Esophagus muscularis mucosa (tissue), 4 donors: ENCODE measurements at regions of chr10 and their contacts with region 1.

Region 1: DNA sequence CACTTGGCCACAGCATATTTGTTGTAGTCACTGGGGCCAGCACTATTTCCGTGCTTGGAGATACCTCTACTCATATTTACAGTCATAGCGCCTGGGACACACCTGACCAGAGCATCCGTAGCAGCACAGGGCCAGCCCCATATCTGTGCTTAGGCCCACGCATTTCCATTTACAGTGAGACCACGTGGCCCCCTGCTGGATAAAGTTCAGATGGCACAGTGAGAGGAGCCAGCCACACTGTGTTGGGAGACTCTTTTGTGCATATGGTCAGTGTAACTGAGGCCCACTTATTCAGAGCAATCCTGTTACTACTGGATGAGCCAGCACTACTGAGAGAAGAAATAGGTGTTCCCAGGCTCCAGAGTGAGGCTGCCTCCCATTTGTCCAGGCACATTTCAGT is 455.3 kb downstream of the REEP3 start:
- DNase-seq: peak; percentile 82
- H3K4me3 ChIP-seq: no peak overlapping the region
- H3K27ac ChIP-seq: no peak overlapping the region
- H3K4me1 ChIP-seq: no peaks in the 10 kb centered on the region
- H3K27me3 ChIP-seq: no peaks in the 10 kb centered on the region
- CTCF ChIP-seq: peak in 2 of 3 experiments; percentile 15 to 40
- EP300 ChIP-seq: no peak
- POLR2A ChIP-seq: no peak

Region 2: DNA sequence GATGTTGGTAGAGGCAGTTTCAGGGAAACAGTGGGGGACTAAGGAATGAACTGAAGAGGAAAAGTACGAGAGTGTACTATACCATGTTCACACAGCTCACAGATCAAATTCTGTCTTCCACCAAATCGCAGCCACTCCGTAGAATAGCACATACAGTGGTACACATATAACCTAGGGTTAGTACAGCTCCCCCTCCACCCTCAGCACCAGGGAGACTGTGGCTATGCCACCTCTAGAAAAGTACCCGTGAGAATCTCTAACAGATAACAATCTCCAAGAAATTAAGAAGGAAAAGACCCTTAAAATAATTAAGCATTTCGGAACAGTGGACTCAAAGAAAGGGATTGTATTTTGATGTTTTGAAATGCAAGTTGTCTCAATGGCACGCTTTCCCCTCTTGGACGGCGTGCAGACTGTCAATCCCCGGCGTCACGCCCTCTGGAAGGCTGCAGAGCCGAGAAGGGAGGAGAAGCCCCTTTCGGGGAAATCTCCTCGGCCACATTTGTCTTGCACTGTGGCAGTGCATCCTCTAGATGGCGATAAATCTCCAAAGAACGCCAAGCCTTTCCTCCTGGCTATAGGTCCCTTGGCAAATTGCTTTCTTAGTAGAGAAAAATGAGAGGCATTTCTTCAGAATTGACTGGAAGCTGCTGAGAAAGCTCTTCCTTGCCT is 110.3 kb before region 1 on chr10:
- intact Hi-C with region 1: loop called (anchors 5 kb)
- DNase-seq: no peak
- H3K4me3 ChIP-seq: peak overlapping the region in 1 of 4 donors; percentile 0
- H3K27ac ChIP-seq: no peak overlapping the region
- H3K4me1 ChIP-seq: peaks cover 4 to 11% (median 10%) of the 10 kb centered on the region in 4 donors
- H3K27me3 ChIP-seq: peaks cover 0 to 28% (median 2%) of the 10 kb centered on the region in 4 donors
- CTCF ChIP-seq: peak; percentile 64 to 87 (median 74)
- EP300 ChIP-seq: no peak
- POLR2A ChIP-seq: no peak